AG04450 (cell line): ENCODE measurements at regions of chr6 and their contacts with region 1.

Region 1: GRCh38 chr6:42901536-42901957 is 14.3 kb upstream of the PTCRA start:
- DNase-seq: peak; percentile 62
- H3K4me3 ChIP-seq: no peak overlapping the region
- H3K27ac ChIP-seq: no peak overlapping the region
- H3K27me3 ChIP-seq: no peaks in the 10 kb centered on the region
- CTCF ChIP-seq: peak; percentile 83

Region 2: DNA sequence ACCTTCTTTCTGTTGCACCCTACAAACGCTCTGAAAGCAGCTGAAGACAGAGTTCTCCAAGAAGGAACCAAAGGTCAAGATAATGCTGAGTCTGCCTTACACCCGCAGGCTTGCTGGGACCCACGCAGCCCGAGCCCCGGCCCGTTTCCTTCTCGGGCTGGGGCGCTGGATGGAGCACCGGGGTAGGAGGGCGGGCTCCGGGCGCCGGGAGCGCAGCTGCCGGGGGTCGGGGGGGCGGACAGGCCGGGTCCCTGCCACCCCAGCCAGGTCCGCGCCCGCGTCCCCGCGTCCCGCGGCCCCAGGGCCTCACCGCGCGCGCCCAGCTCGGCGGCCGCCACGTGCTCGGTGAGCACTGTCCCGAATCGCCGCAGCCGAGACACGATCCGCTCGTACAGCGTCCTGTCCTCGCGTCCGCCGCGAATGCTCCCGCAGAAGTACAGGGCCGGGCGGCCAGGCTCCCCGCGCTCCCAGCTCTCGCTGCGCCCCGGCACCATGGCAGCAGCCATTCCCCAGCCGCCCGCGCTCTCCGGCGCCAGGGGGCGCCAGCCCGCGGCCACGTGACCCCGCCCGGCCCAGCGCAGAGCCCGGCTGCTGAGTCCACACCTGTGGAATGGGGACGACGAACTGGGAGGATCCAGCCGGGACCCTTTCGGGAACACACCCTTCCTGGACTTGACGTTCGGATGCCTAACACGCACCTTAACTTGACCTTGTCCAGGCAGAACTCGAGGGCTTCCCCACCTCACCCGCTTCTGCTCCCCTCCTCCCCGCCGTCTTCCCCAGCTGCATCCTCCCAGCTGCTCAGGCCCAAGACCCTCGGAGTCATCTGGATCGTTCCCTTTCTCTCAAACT is 327.6 kb after region 1 on chr6 and contains the start of gene DNPH1:
- CTCF ChIA-PET with region 1: interaction called, 10 read pairs
- POLR2A ChIA-PET with region 1: no interaction called
- DNase-seq: no peak
- H3K4me3 ChIP-seq: peak within 1 kb of the TSS; percentile 66
- H3K27ac ChIP-seq: no peak within 1 kb of the TSS
- H3K27me3 ChIP-seq: peaks cover 9% of the 10 kb centered on the region
- CTCF ChIP-seq: peak; percentile 64
- polyA plus RNA-seq, gene DNPH1: 36.9 and 42.4 TPM in 2 replicates